ENCODE measurements at regions of chr17 and their contacts with region 1.

Region 1: GRCh38 chr17:80938556-80938955 is 53.1 kb upstream of the CHMP6 start:
- DNase-seq: peak; percentile 84
- H3K4me3 Mint-ChIP-seq: peak overlapping the region; percentile 42
- H3K27ac Mint-ChIP-seq: peak overlapping the region; percentile 81
- H3K4me1 Mint-ChIP-seq: peaks cover 53% of the 10 kb centered on the region
- H3K27me3 Mint-ChIP-seq: no peaks in the 10 kb centered on the region

Region 2: GRCh38 chr17:80951121-80952100 is 12.9 kb after region 1 on chr17:
- CTCF ChIA-PET with region 1: no interaction called
- POLR2A ChIA-PET with region 1: interaction called, 11 read pairs
- DNase-seq: peak; percentile 36
- H3K4me3 Mint-ChIP-seq: no peak overlapping the region
- H3K27ac Mint-ChIP-seq: peak overlapping the region; percentile 40
- H3K4me1 Mint-ChIP-seq: peaks cover 11% of the 10 kb centered on the region
- H3K27me3 Mint-ChIP-seq: no peaks in the 10 kb centered on the region

Measured in activated CD4-positive, alpha-beta memory T cell treated with anti-CD3 and anti-CD28 coated beads, Interleukin-2, amount 10 ng/mL, durations not matched to agents 7 days and 5 days (primary cell).